Esophagus muscularis mucosa (tissue), 4 donors: ENCODE measurements at regions of chr7 and their contacts with region 1.

Region 1: GRCh38 chr7:3825491-3825890 is 524.4 kb downstream of the SDK1 start:
- DNase-seq: no peak
- H3K4me3 ChIP-seq: no peak overlapping the region
- H3K27ac ChIP-seq: no peak overlapping the region
- H3K4me1 ChIP-seq: no peaks in the 10 kb centered on the region
- H3K27me3 ChIP-seq: no peaks in the 10 kb centered on the region
- CTCF ChIP-seq: no peak
- EP300 ChIP-seq: no peak
- POLR2A ChIP-seq: no peak

Region 2: DNA sequence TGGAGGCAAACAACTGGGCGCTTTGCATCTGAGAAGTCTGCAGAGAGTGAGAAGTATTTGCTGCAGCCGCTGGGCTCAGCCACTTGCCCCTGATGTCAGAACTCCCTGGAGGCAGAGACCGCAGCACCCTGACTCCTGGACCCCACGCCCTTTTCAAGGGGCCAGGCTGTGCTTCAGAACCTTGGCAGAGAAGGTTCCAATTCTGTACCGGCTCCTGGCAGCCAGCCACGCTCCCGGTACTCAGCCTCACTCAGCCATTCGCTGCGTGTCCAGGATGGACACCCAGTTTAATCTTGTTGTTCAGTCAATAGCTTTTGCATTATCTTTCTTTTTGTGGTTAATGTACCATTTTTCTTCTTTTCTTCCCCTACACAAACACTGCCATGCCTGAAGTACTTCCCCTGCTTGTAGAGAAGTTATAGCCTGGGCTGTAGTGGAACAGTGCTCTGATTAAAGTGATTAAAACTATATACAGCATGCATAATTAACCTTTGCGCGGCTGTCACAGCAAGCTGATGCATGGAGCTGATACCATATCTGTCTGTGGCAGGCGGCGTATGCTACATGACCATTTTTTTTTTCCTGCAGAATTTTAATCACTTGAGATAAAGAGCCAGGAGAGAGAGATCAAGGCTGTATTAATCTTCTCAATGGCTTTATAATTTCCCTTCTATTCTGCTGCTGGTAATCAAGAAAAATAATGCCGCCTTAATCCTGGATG is 54.0 kb after region 1 on chr7:
- intact Hi-C with region 1: loop called (anchors 5 kb)
- DNase-seq: peak; percentile 82
- H3K4me3 ChIP-seq: no peak overlapping the region
- H3K27ac ChIP-seq: no peak overlapping the region
- H3K4me1 ChIP-seq: no peaks in the 10 kb centered on the region
- H3K27me3 ChIP-seq: peaks cover 0 to 3% (median 0%) of the 10 kb centered on the region in 4 donors
- CTCF ChIP-seq: no peak
- EP300 ChIP-seq: no peak
- POLR2A ChIP-seq: no peak